Cardiac septum (tissue), 1 donor: ENCODE measurements at regions of chr13 and their contacts with region 1.

Region 1: DNA sequence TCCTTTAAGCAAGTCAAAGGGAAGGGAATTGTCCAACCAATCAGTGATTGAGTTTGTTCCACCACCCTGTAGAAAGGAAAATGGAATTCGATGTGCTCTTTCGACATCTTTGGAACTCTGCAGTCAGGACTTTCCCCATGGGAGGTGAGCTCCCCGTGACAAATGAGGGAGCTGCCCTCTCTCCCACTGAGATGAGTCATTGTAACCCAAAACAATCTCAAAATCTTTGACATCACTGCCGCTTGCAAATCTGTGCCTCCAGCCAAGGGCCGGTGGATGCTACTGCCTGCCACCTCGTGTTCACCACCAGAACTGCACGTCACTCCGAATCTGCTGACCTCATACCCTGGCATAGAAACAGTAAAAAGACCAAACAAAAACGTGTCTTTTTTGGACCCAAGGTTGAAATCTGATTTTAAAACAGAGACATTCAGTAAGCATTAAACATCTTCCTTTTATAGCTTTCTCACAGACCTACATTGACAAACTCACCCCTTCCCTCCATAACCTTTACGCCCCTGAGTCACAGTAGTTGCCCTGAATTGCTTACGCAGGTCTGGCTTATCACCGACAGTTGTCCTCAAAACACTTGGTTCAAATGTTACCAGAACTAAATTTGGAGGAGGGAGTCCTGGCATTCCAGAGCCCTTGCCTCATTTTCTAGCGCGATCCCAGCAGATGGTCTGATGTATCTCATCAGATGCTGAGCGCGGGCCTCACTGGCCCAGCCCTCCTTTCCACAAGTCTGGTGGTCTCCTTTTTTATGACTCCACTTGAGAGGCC is 105.2 kb downstream of the COL4A2 start:
- DNase-seq: peak; percentile 91

Region 2: GRCh38 chr13:109500146-109500773 is 912.1 kb before region 1 on chr13:
- intact Hi-C with region 1: no loop called
- DNase-seq: no peak

Region 3: DNA sequence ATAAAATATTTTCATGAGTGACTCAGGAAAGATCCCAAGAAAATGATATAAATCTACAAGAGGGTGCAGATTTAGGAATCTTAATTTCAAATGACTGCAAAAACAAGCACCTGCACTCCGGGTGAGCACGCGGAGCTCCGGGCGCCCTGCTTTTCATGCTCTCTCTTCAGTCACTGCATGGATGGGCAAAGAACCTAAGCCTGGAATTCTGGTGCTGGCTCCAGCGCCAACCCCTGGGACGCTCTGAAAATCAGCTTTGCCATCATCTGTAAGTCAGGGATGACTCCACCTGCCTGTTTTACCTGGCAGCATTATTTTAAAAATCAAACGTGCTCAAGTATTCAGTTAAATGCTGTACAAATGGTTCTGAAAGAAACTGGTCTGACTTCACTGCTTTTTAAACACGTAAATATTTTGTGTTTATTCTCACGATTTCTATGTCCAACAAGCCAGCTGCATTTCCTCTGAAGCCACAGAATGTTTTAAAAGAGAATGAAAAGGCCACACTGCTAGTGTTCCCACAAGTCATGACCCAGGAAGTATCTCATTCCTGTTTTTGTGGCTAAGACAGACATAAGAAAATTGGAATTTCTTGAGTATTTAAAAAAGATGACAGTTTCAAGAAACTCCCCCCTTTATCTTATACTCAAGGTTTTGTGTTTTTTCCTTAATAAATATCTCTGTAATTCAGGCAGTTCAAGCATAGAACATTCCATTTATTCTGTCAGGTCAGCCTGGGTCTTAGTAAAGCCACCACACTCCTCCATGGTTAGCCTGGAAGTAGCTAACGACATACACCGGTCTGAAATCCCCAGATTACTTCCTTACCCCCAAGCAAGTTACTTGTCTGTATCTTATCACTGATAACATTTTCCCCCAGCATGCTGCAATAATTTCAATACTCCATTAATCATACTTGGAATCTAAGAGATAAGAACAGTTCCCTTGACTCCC is 186.4 kb before region 1 on chr13:
- intact Hi-C with region 1: loop called (anchors 2 kb)
- DNase-seq: no peak

Region 4: DNA sequence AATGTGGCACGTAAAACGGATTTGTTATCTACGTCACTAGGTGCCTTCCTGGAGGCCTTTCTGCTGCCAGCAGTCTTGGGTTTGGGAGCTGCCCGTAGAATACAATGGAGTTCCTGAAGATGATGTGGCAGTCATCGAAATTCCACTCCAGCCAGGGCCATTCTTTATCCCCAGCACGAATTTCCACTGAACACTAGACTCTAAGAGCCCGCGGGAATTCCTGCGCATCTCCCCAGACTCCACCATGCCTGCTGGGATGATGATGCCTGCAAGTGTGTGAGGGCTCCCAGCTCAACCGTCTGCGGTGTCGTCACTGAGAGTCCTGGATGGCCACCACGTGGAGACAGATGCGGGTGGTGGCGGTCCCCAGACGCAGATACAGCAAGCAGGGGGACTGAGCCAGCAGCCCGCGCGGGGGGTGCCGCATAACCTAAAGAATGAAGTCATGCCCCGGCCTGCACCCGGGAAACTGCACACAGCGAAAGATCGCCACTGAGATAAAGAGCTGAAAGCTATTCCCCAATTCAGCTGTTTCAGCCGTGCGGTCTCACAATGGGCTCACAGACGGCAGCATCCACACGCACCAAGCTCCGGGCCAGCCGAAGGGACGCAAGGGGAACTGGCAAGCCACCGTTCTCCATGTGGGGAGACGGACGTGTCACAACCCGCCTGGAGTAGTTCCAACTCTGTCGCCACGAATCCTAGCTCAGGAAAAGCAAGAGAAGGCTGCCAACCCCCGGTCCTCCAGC is 146.5 kb before region 1 on chr13:
- intact Hi-C with region 1: loop called (anchors 2 kb)
- DNase-seq: peak; percentile 76

Region 5: DNA sequence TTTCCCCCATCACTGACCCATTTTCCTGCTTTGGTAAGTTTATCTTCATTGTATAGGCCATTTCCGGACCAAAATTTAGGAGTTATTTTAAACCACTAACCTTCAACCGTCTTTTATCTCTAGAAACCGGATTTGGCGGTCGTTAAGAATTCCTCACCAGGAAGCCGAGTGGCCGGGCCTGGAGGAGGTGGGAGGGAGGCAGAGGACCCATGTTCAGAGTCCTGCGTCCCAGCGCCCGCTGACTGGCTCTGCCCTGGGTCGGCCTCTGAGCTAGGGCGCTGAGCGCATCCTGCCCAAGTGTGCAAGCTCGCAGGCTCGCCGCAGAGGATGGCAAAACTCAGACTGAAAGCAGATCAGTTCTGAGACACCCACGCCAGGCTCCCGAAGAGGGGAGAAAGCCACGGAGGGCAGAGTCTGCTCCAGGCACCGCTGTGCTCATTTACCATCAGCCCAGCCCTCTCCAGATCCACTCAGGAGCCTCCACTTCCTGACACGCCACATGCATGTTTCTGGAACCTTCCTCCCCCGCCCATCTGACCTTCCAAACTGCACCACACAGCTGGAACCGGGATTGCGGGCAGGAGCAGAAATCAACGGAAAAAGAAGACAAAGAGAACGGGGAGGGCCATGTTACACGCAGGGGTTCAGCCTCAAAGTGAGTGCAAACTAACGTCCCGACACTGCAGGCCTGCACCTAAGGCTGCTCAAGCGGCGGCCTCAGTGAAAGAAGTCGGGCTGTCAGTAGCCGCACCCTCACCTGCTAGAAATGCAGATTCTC is 113.6 kb before region 1 on chr13:
- intact Hi-C with region 1: no loop called
- DNase-seq: no peak

Region 6: DNA sequence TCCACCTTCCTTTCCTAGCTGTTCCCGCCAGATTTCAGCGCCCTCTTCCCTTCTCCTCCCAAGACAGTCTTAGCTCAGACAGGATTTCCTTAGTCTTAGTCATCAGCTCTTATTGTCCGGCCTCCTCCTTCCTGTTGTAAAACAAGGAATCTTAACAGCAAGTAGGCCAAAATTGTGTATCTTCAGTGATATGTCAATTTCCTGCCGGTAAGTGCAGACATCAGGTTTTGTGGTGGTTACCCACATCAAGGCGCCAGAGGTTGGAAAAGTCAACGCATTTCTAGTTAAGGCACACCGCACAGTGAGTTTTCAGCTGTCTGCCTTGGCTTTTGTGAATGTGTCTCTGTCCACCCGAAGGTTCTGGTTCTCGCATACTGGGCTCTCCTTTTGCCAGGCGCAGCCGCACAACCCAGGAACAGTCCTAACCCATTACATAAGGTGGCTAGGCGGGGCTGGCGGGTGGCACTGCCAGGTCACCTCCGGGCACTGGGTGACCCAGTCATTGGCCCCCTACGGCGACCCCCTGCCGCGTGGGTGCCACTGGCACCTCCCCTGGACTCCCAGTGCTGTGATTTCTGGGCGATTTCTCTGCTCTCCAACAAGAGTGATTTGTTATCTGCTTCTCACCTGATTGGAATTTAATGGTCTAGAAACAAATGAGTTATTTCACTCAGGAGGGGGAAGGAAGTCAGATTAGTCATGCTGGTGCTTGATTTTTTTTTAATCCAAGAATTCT is 92.4 kb before region 1 on chr13:
- intact Hi-C with region 1: loop called (anchors 5 kb)
- DNase-seq: no peak

Region 7: GRCh38 chr13:110361365-110361911 is 50.9 kb before region 1 on chr13:
- intact Hi-C with region 1: no loop called
- DNase-seq: peak; percentile 82

Region 8: DNA sequence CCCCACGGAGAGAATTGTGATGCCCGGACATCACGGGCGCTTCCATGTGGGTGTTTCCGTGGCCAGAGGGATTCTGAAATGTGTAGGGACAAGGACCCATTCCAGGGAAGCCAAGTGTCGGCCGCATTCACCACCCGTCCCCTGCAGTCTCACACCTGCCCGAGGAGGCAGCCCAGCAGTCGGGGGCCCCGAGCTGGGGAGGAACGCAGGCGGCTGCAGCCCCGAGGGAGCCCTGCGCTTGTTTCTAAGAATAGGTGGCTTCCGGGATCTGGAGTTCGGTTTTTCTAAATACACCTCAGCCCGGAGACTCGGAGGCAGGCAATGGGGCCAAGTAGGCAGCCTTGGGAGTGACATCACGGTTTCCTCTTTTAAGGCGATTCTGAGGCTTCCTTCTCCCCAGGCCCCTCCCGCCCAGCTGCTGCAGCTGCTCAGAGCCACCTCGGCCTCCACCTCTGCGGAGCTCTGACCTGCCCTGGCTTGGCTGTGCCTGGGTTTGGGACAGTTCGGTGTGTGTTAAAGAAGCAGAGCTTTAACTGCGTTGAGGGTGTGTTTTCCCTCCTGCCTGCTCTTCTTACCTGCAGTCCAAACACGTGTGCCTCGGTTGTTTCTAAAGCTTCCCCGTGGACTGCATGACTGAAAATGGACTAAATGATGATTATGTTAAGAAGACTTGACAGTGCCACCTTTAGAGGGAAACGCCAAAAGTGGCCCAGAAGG is 24.8 kb before region 1 on chr13:
- intact Hi-C with region 1: loop called (anchors 2 kb)
- DNase-seq: peak; percentile 87

Region 9: DNA sequence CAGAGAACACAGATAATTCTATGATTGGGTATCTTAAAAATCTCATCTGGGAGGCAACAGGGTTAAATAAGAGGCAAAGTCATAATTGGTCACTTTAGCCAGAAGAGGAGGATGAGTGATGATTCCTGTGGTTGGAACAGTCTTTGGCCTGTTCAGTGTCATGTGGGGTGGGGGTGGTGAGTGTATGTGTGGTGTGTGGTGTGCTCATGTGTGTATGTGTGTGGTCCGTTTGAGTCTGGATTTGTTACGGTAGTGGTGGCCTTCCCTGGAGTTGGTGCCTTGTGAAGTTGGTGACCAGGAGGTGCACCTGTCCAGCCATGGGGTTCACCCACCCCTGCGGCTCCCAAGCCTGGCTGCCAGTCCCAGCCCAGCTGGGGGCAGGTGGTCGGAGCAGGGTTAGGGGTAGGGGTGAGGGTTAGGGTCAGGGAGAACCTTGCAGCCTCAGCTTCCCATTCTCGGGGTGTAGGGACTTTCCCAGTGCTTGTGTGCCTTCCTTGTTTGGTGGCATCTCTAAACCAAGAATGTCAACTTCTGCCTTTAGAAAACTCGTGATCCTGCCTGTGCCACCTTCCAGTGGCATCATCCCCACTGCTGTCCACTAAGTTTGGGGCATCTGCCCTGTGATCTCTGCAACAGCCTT is 51.7 kb after region 1 on chr13:
- intact Hi-C with region 1: no loop called
- DNase-seq: no peak